B cell (primary cell): ENCODE measurements at regions of chr6 and their contacts with region 1.

Region 1: GRCh38 chr6:11653028-11653583 is 115.6 kb downstream of the TMEM170B start:
- DNase-seq: no peak
- ATAC-seq: peak; percentile 49
- H3K4me3 ChIP-seq: no peak overlapping the region
- H3K4me3 Mint-ChIP-seq: no peak overlapping the region
- H3K27ac ChIP-seq: no peak overlapping the region
- H3K27ac Mint-ChIP-seq: no peak overlapping the region
- H3K4me1 ChIP-seq: peaks cover 0 to 5% of the 10 kb centered on the region in 2 donors
- H3K4me1 Mint-ChIP-seq: peaks cover 1% of the 10 kb centered on the region
- H3K27me3 ChIP-seq: peaks cover 0 to 9% (median 5%) of the 10 kb centered on the region in 4 experiments
- H3K27me3 Mint-ChIP-seq: peaks cover 14% of the 10 kb centered on the region
- CTCF ChIP-seq: no peak

Region 2: DNA sequence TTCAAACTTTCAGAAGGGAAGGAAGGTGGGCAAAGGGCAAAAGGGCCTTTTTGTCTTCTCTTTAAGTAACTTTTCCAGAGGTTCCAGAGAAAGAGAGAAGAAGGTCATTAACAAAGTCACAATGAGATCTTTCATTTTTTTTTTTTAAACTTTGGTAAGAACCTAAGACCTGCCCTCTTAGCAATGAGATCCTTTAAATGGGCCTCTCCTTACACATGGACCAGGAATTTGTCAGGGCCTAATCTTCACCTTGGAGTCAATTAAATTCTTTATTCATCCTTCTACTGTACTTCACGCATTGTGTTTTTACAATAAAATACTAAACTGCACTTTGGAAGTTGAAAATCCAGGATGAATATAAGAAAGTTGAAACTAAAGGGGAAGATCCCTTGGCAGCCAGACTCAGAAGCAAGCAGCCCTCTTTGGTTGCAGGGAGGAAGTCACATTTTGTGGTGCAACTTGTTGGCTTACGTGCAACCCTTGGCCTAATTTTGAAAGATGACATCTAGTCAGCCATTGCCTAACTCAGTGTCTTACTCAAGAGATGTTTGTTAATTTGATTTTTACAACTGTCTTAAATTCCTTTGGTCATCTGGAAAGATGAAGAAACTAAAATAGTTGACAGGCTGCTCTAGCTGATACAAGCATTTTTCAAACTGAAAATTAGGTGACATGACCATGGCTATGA is 127.5 kb before region 1 on chr6:
- CTCF ChIA-PET with region 1: no interaction called
- POLR2A ChIA-PET with region 1: no interaction called
- intact Hi-C with region 1: no loop called
- DNase-seq: no peak
- ATAC-seq: no peak
- H3K4me3 ChIP-seq: no peak overlapping the region
- H3K4me3 Mint-ChIP-seq: no peak overlapping the region
- H3K27ac ChIP-seq: no peak overlapping the region
- H3K27ac Mint-ChIP-seq: no peak overlapping the region
- H3K4me1 ChIP-seq: no peaks in the 10 kb centered on the region
- H3K4me1 Mint-ChIP-seq: peaks cover 5% of the 10 kb centered on the region
- H3K27me3 ChIP-seq: peaks cover 0 to 3% (median 0%) of the 10 kb centered on the region in 4 experiments
- H3K27me3 Mint-ChIP-seq: peaks cover 11% of the 10 kb centered on the region
- CTCF ChIP-seq: no peak

Region 3: GRCh38 chr6:11631008-11631407 is 22.1 kb before region 1 on chr6:
- CTCF ChIA-PET with region 1: no interaction called
- POLR2A ChIA-PET with region 1: no interaction called
- intact Hi-C with region 1: no loop called
- DNase-seq: no peak
- ATAC-seq: no peak
- H3K4me3 ChIP-seq: no peak overlapping the region
- H3K4me3 Mint-ChIP-seq: no peak overlapping the region
- H3K27ac ChIP-seq: no peak overlapping the region
- H3K27ac Mint-ChIP-seq: no peak overlapping the region
- H3K4me1 ChIP-seq: no peaks in the 10 kb centered on the region
- H3K4me1 Mint-ChIP-seq: no peaks in the 10 kb centered on the region
- H3K27me3 ChIP-seq: no peaks in the 10 kb centered on the region
- H3K27me3 Mint-ChIP-seq: peaks cover 23% of the 10 kb centered on the region
- CTCF ChIP-seq: no peak

Region 4: DNA sequence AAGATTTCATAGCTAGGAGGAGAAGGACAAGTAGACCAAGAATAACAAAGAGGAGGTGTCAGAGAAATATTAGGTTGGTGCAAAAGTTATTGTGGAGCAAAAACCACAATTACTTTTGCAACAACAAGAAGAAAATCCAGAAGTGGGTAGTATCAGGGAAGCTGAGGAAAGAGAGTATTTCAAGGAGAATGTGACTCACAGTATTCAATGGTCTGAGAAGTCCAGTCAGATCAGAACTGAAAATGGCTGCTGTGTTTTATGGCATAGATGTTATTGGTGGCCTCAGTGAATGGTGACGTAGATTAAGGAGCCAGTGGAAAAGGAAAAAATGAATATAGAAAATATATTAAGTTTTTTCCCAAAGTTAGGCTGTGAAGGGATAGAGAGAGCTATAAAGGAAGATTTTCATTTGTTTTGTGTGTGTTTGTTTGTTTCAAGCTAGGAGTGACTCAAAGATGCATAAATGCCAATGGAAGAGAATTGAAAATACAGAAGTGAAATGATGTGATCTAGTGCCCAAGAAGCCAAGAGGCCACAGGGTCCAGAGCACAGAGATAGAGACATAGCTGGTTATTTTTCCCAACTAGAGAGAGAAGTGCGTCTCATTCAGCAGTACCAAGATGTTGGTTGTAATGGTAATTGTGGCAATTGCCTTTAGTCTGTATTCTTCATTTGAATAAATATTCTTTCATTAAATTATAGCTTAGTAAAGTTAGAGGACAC is 12.7 kb after region 1 on chr6:
- CTCF ChIA-PET with region 1: interaction called, 18 read pairs
- POLR2A ChIA-PET with region 1: no interaction called
- intact Hi-C with region 1: no loop called
- DNase-seq: no peak
- ATAC-seq: no peak
- H3K4me3 ChIP-seq: no peak overlapping the region
- H3K4me3 Mint-ChIP-seq: no peak overlapping the region
- H3K27ac ChIP-seq: no peak overlapping the region
- H3K27ac Mint-ChIP-seq: no peak overlapping the region
- H3K4me1 ChIP-seq: no peaks in the 10 kb centered on the region
- H3K4me1 Mint-ChIP-seq: no peaks in the 10 kb centered on the region
- H3K27me3 ChIP-seq: peaks cover 0 to 11% (median 6%) of the 10 kb centered on the region in 4 experiments
- H3K27me3 Mint-ChIP-seq: peaks cover 49% of the 10 kb centered on the region
- CTCF ChIP-seq: no peak

Region 5: GRCh38 chr6:11824986-11825385 is 171.9 kb after region 1 on chr6:
- CTCF ChIA-PET with region 1: interaction called, 10 read pairs
- POLR2A ChIA-PET with region 1: no interaction called
- intact Hi-C with region 1: no loop called
- DNase-seq: peak; percentile 28
- ATAC-seq: peak; percentile 56
- H3K4me3 ChIP-seq: no peak overlapping the region
- H3K4me3 Mint-ChIP-seq: no peak overlapping the region
- H3K27ac ChIP-seq: no peak overlapping the region
- H3K27ac Mint-ChIP-seq: no peak overlapping the region
- H3K4me1 ChIP-seq: peaks cover 14 to 16% of the 10 kb centered on the region in 2 donors
- H3K4me1 Mint-ChIP-seq: peaks cover 30% of the 10 kb centered on the region
- H3K27me3 ChIP-seq: no peaks in the 10 kb centered on the region
- H3K27me3 Mint-ChIP-seq: no peaks in the 10 kb centered on the region
- CTCF ChIP-seq: no peak

Region 6: GRCh38 chr6:12233693-12234571 is 580.8 kb after region 1 on chr6:
- CTCF ChIA-PET with region 1: interaction called, 130 read pairs
- POLR2A ChIA-PET with region 1: no interaction called
- intact Hi-C with region 1: loop called (anchors 1 kb)
- DNase-seq: peak; percentile 75
- ATAC-seq: peak; percentile 77
- H3K4me3 ChIP-seq: no peak overlapping the region
- H3K4me3 Mint-ChIP-seq: no peak overlapping the region
- H3K27ac ChIP-seq: no peak overlapping the region
- H3K27ac Mint-ChIP-seq: no peak overlapping the region
- H3K4me1 ChIP-seq: peaks cover 0 to 5% of the 10 kb centered on the region in 2 donors
- H3K4me1 Mint-ChIP-seq: peaks cover 10% of the 10 kb centered on the region
- H3K27me3 ChIP-seq: no peaks in the 10 kb centered on the region
- H3K27me3 Mint-ChIP-seq: no peaks in the 10 kb centered on the region
- CTCF ChIP-seq: peak; percentile 77

Region 7: GRCh38 chr6:12459945-12460661 is 807.0 kb after region 1 on chr6:
- CTCF ChIA-PET with region 1: no interaction called
- POLR2A ChIA-PET with region 1: no interaction called
- intact Hi-C with region 1: no loop called
- DNase-seq: no peak
- ATAC-seq: no peak
- H3K4me3 ChIP-seq: no peak overlapping the region
- H3K4me3 Mint-ChIP-seq: no peak overlapping the region
- H3K27ac ChIP-seq: no peak overlapping the region
- H3K27ac Mint-ChIP-seq: no peak overlapping the region
- H3K4me1 ChIP-seq: no peaks in the 10 kb centered on the region
- H3K4me1 Mint-ChIP-seq: no peaks in the 10 kb centered on the region
- H3K27me3 ChIP-seq: no peaks in the 10 kb centered on the region
- H3K27me3 Mint-ChIP-seq: peaks cover 27% of the 10 kb centered on the region
- CTCF ChIP-seq: no peak

Region 8: GRCh38 chr6:12504319-12504966 is 851.3 kb after region 1 on chr6:
- CTCF ChIA-PET with region 1: interaction called, 7 read pairs
- POLR2A ChIA-PET with region 1: no interaction called
- intact Hi-C with region 1: loop called (anchors 5 kb)
- DNase-seq: peak; percentile 11
- ATAC-seq: no peak
- H3K4me3 ChIP-seq: no peak overlapping the region
- H3K4me3 Mint-ChIP-seq: no peak overlapping the region
- H3K27ac ChIP-seq: no peak overlapping the region
- H3K27ac Mint-ChIP-seq: no peak overlapping the region
- H3K4me1 ChIP-seq: no peaks in the 10 kb centered on the region
- H3K4me1 Mint-ChIP-seq: no peaks in the 10 kb centered on the region
- H3K27me3 ChIP-seq: peaks cover 0 to 2% (median 0%) of the 10 kb centered on the region in 4 experiments
- H3K27me3 Mint-ChIP-seq: peaks cover 4% of the 10 kb centered on the region
- CTCF ChIP-seq: peak; percentile 46

Region 9: GRCh38 chr6:12890171-12890790 is 1237.2 kb after region 1 on chr6:
- CTCF ChIA-PET with region 1: interaction called, 11 read pairs
- POLR2A ChIA-PET with region 1: no interaction called
- intact Hi-C with region 1: no loop called
- DNase-seq: peak; percentile 18
- ATAC-seq: no peak
- H3K4me3 ChIP-seq: no peak overlapping the region
- H3K4me3 Mint-ChIP-seq: no peak overlapping the region
- H3K27ac ChIP-seq: no peak overlapping the region
- H3K27ac Mint-ChIP-seq: no peak overlapping the region
- H3K4me1 ChIP-seq: peaks cover 0 to 4% of the 10 kb centered on the region in 2 donors
- H3K4me1 Mint-ChIP-seq: peaks cover 4% of the 10 kb centered on the region
- H3K27me3 ChIP-seq: no peaks in the 10 kb centered on the region
- H3K27me3 Mint-ChIP-seq: peaks cover 18% of the 10 kb centered on the region
- CTCF ChIP-seq: peak; percentile 50